SK-N-SH (cell line): ENCODE measurements at regions of chr2 and their contacts with region 1.

Region 1: DNA sequence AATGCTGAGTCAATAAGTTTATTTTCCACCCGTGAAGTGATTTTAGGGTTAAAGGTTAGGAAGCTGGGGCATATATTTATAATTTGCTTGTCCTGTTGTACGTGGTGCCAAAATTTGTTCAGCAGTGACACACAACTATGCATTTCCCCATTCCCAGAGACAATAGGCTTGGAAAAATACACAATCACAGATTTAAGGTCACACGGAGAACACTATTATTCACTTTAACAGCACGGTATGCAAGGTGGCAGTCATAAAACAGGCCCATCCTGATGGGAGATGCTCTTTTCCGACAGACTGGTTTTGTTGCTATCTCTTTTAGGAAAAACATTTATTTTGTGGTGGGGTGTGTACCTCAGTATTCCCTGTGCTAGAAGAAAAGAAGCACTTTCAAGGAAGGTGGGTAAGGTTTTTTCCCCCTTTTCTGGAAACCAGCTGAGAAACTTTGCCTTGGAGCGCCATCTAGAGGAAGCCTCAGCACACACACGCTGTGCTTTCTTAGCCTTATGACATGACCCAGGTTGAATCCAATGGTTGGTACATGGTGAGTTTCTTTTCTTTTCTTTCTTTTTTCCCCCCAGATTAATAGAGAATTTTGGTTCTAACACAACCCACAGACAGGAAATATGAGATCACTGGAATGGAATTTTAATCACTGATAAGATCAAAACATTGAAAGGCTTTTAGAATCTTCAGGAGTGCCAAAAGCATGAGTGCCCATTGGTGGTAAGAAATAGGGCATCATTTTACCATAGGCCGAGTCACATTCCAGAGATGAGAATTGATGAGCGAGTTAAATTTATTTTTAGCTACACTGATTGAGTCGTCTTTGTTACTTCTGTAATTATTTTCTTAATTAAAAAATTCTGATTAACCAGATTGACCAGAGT is 332.1 kb downstream of the AGPS start:
- DNase-seq: peak; percentile 60
- H3K4me3 ChIP-seq: peak overlapping the region in 1 of 2 experiments; percentile 53; a peak in 1 of 4 replicates
- H3K27ac ChIP-seq: no peak overlapping the region; a peak in 1 of 4 replicates
- H3K4me1 ChIP-seq: peaks cover 0 to 7% of the 10 kb centered on the region in 2 experiments; a peak in 1 of 4 replicates
- H3K27me3 ChIP-seq: no peaks in the 10 kb centered on the region
- CTCF ChIP-seq: peak; percentile 98
- EP300 ChIP-seq: no peak
- RAD21 ChIP-seq: peak; percentile 95

Region 2: DNA sequence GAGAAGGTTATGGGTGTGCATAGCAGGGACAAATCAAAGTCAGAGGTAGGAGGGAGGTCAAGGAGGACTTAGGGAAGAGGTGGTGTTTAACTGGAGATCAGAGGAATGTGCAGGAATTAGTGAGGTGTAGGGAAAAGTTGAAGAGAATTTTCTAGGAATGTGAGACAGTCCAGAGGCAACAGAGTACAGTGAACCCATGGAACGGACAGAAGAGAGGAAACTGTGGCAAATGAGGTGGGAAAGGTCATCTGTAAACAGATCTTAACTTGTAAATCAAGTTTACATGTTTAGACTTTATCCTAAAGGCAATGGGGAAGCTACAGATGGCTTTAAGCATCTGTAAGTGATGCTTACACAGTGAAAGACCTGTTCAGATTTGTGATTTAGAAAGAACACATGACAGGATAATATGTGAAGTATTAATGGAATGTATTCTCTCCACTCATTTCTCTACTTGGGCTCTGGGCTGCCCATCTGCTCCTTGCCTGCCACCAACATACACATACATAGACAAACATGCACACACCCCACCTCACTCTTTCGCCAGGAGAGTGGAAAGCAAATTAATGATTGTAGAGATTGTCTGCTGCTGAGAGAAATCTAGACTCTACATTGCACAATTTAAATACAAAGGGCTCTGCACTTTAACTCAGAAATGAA is 399.2 kb before region 1 on chr2:
- CTCF ChIA-PET with region 1: no interaction called
- POLR2A ChIA-PET with region 1: no interaction called
- DNase-seq: no peak
- H3K4me3 ChIP-seq: no peak overlapping the region
- H3K27ac ChIP-seq: peak overlapping the region in 1 of 2 experiments; percentile 19; a peak in 1 of 4 replicates
- H3K4me1 ChIP-seq: peaks cover 0 to 2% of the 10 kb centered on the region in 2 experiments; a peak in 1 of 4 replicates
- H3K27me3 ChIP-seq: no peaks in the 10 kb centered on the region
- CTCF ChIP-seq: no peak
- EP300 ChIP-seq: no peak
- RAD21 ChIP-seq: no peak

Region 3: GRCh38 chr2:177501186-177501585 is 223.5 kb before region 1 on chr2:
- CTCF ChIA-PET with region 1: interaction called, 19 read pairs
- POLR2A ChIA-PET with region 1: no interaction called
- DNase-seq: no peak
- H3K4me3 ChIP-seq: no peak overlapping the region
- H3K27ac ChIP-seq: no peak overlapping the region
- H3K4me1 ChIP-seq: no peaks in the 10 kb centered on the region; a peak in 1 of 4 replicates
- H3K27me3 ChIP-seq: no peaks in the 10 kb centered on the region
- CTCF ChIP-seq: no peak
- EP300 ChIP-seq: no peak
- RAD21 ChIP-seq: no peak

Region 4: DNA sequence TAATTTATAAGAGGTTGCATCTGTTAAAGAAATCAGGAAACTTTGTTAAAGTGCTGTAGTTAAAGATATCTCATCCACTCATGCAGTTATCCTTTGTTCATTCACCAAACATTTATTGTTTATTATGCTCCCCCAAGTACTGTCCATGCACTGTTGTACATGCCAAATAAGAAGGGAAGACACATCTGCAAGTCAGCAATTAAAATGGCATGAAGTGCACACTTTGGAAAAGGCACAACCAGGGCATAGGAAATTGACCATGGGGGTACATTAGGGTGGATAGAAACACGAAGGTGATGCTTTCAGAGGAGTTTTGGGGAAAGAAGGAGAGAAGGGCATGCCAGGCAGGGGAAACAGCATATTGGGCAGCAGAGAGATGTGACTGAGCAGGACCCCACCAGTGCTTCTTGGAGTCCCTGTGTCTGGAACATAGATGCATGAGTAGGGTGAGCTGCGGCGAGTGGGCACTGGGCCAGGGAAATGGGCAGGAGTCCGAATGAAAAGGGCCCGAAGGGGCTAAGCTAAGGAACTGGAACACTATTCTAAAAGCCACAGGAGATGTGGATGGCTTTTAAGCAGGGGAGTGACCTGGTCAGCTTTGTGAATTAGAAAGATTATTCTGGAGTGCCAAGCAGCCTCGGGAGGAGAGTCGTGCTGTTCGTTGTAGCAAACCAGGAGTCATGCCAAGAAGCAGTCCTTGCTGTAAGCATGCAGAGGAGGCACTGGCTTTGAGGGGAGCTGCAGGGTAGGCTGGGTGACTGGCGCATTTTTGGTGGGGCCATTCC is 15.8 kb before region 1 on chr2:
- CTCF ChIA-PET with region 1: interaction called, 12 read pairs
- POLR2A ChIA-PET with region 1: no interaction called
- DNase-seq: peak; percentile 33
- H3K4me3 ChIP-seq: no peak overlapping the region
- H3K27ac ChIP-seq: peak overlapping the region in 1 of 2 experiments; percentile 3; a peak in 1 of 4 replicates
- H3K4me1 ChIP-seq: peaks cover 0 to 18% of the 10 kb centered on the region in 2 experiments; a peak in 1 of 4 replicates
- H3K27me3 ChIP-seq: no peaks in the 10 kb centered on the region
- CTCF ChIP-seq: no peak
- EP300 ChIP-seq: peak in 1 of 2 experiments; percentile 30; a peak in 1 of 4 replicates
- RAD21 ChIP-seq: no peak

Region 5: GRCh38 chr2:177753682-177754491 is 29.2 kb after region 1 on chr2:
- CTCF ChIA-PET with region 1: interaction called, 16 read pairs
- POLR2A ChIA-PET with region 1: interaction called, 3 read pairs
- DNase-seq: peak; percentile 41
- H3K4me3 ChIP-seq: no peak overlapping the region
- H3K27ac ChIP-seq: no peak overlapping the region; a peak in 1 of 4 replicates
- H3K4me1 ChIP-seq: peaks cover 0 to 23% of the 10 kb centered on the region in 2 experiments; a peak in 2 of 4 replicates
- H3K27me3 ChIP-seq: no peaks in the 10 kb centered on the region
- CTCF ChIP-seq: no peak
- EP300 ChIP-seq: no peak
- RAD21 ChIP-seq: no peak